Esophagus squamous epithelium (tissue), 5 donors: ENCODE measurements at regions of chr2 and their contacts with region 1.

Region 1: GRCh38 chr2:112884869-112885505 is 26.0 kb upstream of the IL37 start:
- DNase-seq: no peak
- H3K4me3 ChIP-seq: no peak overlapping the region
- H3K27ac ChIP-seq: no peak overlapping the region
- H3K4me1 ChIP-seq: peaks cover 0 to 17% (median 3%) of the 10 kb centered on the region in 3 donors
- H3K27me3 ChIP-seq: no peaks in the 10 kb centered on the region
- CTCF ChIP-seq: peak; percentile 52 to 90 (median 74)
- POLR2A ChIP-seq: no peak

Region 2: GRCh38 chr2:112749755-112750559 is 135.0 kb before region 1 on chr2:
- intact Hi-C with region 1: loop called (anchors 10 kb)
- DNase-seq: no peak
- H3K4me3 ChIP-seq: no peak overlapping the region
- H3K27ac ChIP-seq: peak overlapping the region in 1 of 4 donors; percentile 19
- H3K4me1 ChIP-seq: peaks cover 0 to 9% (median 0%) of the 10 kb centered on the region in 3 donors
- H3K27me3 ChIP-seq: no peaks in the 10 kb centered on the region
- CTCF ChIP-seq: peak; percentile 78 to 95 (median 92)
- POLR2A ChIP-seq: no peak